H1 (cell line): ENCODE measurements at regions of chr5 and their contacts with region 1.

Region 1: GRCh38 chr5:14727428-14727865 is 62.9 kb downstream of the OTULIN start:
- DNase-seq: peak; percentile 47 to 89
- H3K4me3 ChIP-seq: peak overlapping the region in 1 of 4 experiments; percentile 26; a peak in 1 of 8 replicates
- H3K27ac ChIP-seq: no peak overlapping the region
- H3K4me1 ChIP-seq: peaks cover 8 to 22% (median 17%) of the 10 kb centered on the region in 4 experiments
- H3K27me3 ChIP-seq: 0 out of 7 replicates have a peak, but pooled peaks cover 0 to 2% (median 0%) of the 10 kb centered on the region in 4 experiments
- CTCF ChIP-seq: peak; percentile 81 to 83 (median 82)
- EP300 ChIP-seq: no peak
- POLR2A ChIP-seq: no peak
- RAD21 ChIP-seq: peak; percentile 97

Region 2: DNA sequence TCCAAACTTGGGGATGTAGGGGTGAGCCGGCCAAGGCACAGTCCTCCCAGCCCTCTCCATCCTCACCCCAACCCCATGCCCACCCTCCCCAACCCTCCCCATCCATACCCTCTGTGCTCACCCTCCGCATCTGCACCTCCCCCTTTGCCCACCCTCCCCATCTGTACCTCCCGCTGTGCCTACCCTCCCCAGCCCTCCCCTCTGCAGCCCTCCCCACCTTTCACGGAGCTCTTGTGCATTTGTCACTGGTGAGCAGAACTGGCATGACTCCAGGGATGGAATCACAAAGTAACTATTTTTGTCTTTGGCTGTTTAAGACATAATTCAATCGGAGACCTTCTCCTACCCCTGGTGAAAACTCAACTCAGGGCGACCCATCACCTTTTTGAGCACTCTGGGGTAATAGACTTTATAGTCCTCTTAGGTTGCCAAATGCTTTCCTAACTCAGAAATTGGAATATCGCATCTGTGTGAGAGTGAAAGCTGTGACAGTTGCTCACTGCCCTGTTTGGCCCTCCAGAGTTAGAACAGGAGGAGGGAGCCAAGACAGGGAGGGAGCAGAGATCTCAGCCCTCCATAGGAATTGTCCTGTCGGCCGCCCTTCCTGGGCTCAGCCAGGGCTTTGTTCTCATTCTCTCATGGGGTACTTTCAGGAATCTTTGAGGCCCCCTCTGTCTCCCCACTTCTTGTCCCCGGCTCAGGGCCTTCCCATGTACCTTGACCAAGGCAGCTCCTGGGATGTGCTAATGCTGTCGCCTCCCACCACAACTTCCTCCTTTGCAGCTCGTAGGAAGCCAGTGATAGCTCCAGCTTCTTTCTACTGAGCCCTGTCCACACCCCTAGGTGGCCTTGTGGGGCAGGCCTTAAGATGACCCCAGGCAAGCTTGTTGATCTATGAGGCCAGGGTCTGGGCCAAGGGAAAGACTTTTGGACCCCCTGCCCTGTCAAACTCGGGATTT is 26.7 kb before region 1 on chr5:
- CTCF ChIA-PET with region 1: interaction called, 13 read pairs
- POLR2A ChIA-PET with region 1: no interaction called
- DNase-seq: no peak
- H3K4me3 ChIP-seq: no peak overlapping the region
- H3K27ac ChIP-seq: no peak overlapping the region
- H3K4me1 ChIP-seq: peaks cover 0 to under 1% (median 0%) of the 10 kb centered on the region in 4 experiments; a peak in 1 of 7 replicates
- H3K27me3 ChIP-seq: peaks cover 0 to 3% (median 0%) of the 10 kb centered on the region in 4 experiments; a peak in 1 of 7 replicates
- CTCF ChIP-seq: no peak
- EP300 ChIP-seq: no peak
- POLR2A ChIP-seq: no peak
- RAD21 ChIP-seq: no peak

Region 3: GRCh38 chr5:14760548-14761017 is 33.1 kb after region 1 on chr5:
- CTCF ChIA-PET with region 1: interaction called, 18 read pairs
- POLR2A ChIA-PET with region 1: no interaction called
- DNase-seq: no peak
- H3K4me3 ChIP-seq: no peak overlapping the region
- H3K27ac ChIP-seq: no peak overlapping the region
- H3K4me1 ChIP-seq: peaks cover 0 to 3% (median 0%) of the 10 kb centered on the region in 4 experiments; a peak in 2 of 7 replicates
- H3K27me3 ChIP-seq: no peaks in the 10 kb centered on the region
- CTCF ChIP-seq: no peak
- EP300 ChIP-seq: no peak
- POLR2A ChIP-seq: no peak
- RAD21 ChIP-seq: no peak

Region 4: DNA sequence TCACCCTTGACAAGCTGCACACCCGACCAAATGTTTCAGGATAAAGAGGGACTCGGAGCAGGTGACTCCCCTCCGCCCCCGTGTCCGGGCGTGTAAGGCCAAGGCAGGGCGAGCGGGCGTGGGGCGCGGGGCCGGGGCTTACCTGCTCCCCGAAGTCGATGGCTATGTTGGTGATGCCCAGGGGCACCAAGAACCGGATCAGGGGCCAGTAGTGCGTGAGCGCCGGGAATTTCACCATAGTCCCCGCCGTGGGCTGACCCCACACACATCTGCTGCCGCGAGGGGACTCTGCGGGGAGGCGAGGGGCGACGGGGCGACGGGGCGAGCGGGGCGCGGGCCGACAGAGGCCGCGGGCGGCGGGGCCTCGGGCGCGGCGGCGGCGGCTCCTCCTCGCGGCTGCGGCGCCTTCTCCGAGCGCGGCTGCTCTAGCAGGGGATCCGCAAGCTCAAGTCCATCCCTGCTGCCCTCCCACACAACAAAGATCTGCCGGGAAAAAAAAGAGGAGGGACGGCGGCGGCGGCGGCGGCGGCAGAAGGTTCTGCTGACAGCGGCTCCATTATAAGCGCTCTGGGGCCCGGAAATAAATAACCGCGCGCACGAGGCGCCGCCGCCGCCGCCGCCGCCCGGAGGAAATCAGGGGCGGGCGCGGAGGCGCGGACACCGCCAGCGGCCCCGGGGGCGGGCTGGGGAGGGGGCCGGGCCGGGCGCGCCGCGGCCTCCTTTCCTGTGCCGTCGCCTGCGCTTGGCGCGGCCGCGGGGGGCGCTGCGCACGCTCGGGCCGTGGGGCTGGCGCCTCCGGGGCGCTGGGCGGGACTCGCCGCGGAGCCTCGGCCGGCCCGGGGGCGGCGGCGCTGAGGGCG is 144.0 kb after region 1 on chr5 and contains the start of gene ANKH:
- CTCF ChIA-PET with region 1: interaction called, 31 read pairs
- POLR2A ChIA-PET with region 1: interaction called, 5 read pairs
- DNase-seq: peak in 1 of 2 experiments; percentile 68
- H3K4me3 ChIP-seq: peak within 1 kb of the TSS; percentile 52 to 91 (median 58)
- H3K27ac ChIP-seq: no peak within 1 kb of the TSS
- H3K4me1 ChIP-seq: peaks cover 0 to 4% (median 3%) of the 10 kb centered on the region in 4 experiments; a peak in 3 of 7 replicates
- H3K27me3 ChIP-seq: peaks cover 7 to 40% (median 25%) of the 10 kb centered on the region in 4 experiments
- CTCF ChIP-seq: peak; percentile 17 to 67 (median 48); a peak in 3 of 4 replicates
- EP300 ChIP-seq: 0 out of 3 replicates have a peak, but pooled peaks of 1 of the 2 experiments have one; percentile 5
- POLR2A ChIP-seq: no peak
- RAD21 ChIP-seq: peak in 1 of 2 experiments; percentile 28; a peak in 1 of 4 replicates
- total RNA-seq, gene ANKH: 12.1 and 13.0 TPM in 2 replicates

Region 5: DNA sequence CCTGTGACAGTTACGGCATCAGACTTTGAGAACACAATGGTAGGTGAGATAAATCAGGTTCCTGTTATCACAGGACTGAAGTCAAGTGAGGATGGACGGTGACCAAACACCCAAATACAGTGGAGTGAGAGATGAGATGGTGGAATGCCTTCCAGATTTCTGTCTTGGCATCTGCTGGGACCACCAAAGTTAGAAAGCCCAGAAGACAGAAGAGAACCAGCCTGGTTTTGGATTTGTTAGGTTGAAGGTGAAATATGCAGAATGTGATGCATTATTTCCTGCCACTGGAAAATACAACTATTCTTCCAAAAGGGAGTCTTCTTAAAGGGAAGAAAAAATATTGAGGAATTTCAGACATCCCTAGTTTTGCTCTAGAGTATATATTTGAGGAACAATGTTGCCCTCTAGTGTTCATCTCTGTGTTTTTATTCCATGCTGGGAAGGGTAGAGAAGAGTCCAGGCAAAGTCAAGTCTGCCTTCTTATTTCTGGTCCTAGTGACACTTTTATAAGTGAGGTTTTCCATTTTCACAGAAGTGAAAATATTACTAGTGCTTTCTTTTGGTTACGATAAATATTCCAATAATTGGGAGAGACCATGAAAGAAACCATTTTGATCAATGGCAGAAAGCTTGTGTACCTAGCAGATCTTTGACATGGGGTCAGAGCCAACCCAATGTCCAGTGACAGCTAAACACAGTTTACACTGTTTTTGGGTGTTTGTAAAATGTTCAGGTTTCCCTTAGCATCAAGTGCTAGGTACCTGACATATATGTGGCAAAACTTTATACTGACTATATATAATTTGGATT is 286.4 kb after region 1 on chr5:
- CTCF ChIA-PET with region 1: interaction called, 15 read pairs
- POLR2A ChIA-PET with region 1: interaction called, 4 read pairs
- DNase-seq: no peak
- H3K4me3 ChIP-seq: no peak overlapping the region
- H3K27ac ChIP-seq: no peak overlapping the region
- H3K4me1 ChIP-seq: peaks cover 0 to 2% (median 0%) of the 10 kb centered on the region in 4 experiments; a peak in 2 of 7 replicates
- H3K27me3 ChIP-seq: no peaks in the 10 kb centered on the region
- CTCF ChIP-seq: peak in 2 of 3 experiments; percentile 35 to 63; a peak in 2 of 4 replicates
- EP300 ChIP-seq: no peak
- POLR2A ChIP-seq: no peak
- RAD21 ChIP-seq: peak; percentile 74 to 78